MCF 10A (cell line): ENCODE measurements at regions of chr12 and their contacts with region 1.

Region 1: DNA sequence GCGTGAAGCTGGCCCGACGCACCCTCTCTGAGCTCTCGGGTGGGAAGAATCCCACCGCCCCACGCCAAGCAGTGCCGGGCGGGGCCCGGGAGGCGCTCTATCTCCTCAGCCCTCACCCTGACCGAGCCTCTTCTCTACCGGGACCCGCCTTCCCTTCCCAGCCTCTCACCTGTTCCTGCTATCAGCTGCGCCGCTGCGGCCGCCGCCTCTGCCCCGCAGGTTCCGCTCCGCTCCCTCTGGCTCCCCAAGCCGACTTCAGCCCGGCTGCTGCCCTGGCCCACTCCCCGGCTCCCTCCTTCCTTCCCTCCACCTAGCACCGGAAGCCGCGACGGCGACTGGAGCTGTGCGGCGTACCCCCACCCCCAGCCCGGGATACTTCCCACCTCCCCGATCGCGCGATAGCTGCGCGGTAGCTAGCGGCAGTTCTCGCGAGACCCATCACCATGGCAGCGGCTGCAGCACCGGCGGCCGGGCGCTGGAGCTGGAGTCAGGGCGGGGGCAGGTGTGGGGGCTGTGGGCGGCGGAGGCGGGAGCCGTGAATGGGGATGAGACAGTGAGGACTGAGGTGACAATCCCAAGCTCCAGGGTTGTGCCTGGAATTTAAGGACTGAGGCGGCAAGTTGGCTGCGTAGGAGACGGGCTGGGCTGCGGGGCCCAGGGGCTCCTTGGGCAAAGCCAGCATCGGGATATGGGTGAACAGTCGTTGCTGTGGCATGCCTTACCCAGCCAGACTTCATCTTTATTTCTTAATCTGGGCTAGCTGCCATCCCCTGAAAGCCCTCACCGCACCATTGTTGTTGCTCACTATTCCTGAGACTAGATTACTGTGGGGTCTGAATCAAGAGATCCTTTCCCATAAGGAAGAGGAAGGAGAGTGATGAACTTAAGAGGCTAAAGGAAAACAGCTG is at the start of gene ARF3:
- DNase-seq: peak; percentile 92
- H3K4me3 Mint-ChIP-seq: peak within 1 kb of the TSS; percentile 99
- H3K27ac Mint-ChIP-seq: peak within 1 kb of the TSS; percentile 93
- H3K4me1 Mint-ChIP-seq: peaks cover 34% of the 10 kb centered on the region
- H3K27me3 Mint-ChIP-seq: no peaks in the 10 kb centered on the region
- CTCF ChIP-seq: no peak
- total RNA-seq, gene ARF3: 117 and 129 TPM in 2 replicates

Region 2: DNA sequence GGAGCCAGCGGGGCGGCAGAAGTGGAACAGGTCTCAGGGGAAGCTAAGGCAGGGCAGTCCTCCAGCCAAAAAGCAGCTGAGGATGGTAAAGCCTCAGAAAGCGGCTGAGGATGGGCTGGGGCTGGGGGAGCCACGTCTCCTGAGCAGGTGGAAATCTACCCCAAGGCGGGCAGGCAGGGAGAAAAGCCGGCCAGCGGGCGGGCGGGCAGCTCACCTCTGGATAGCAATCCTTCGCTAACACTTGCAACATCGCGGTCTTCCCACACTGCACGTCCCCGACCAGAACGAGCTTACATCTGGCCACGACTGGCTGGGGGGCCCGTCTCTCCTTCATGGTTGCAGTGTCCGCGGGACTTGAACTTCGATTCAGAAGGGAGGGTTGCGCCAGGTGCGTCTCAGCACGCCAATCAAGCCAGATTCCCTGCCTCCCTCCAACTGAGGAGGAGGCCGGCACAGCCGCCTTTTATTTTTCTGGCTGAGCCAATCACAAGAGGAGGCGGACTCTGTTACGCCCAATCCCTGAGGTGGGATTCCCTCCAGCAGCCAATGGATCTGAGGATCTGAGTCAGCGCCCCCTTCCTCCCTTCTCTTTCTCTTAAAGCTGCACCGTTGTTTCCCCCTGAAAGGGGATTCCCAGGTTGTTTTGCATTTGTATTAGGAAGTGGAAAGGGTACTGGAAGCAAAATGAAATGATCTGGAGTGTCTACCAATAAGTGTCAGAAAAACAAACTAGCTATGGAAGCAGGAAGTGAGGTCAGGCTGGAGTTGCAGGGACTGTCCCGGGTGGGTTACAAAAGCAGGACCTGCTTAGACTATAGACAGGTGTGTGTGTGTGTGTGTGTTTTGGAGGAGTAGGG is 91.7 kb before region 1 on chr12 and contains the start of gene RND1:
- CTCF ChIA-PET with region 1: no interaction called
- POLR2A ChIA-PET with region 1: interaction called, 17 read pairs
- intact Hi-C with region 1: no loop called
- DNase-seq: peak; percentile 95
- H3K4me3 Mint-ChIP-seq: peak within 1 kb of the TSS; percentile 81
- H3K27ac Mint-ChIP-seq: peak within 1 kb of the TSS; percentile 71
- H3K4me1 Mint-ChIP-seq: peaks cover 16% of the 10 kb centered on the region
- H3K27me3 Mint-ChIP-seq: no peaks in the 10 kb centered on the region
- CTCF ChIP-seq: no peak
- total RNA-seq, gene RND1: 1.0 and 1.2 TPM in 2 replicates

Region 3: DNA sequence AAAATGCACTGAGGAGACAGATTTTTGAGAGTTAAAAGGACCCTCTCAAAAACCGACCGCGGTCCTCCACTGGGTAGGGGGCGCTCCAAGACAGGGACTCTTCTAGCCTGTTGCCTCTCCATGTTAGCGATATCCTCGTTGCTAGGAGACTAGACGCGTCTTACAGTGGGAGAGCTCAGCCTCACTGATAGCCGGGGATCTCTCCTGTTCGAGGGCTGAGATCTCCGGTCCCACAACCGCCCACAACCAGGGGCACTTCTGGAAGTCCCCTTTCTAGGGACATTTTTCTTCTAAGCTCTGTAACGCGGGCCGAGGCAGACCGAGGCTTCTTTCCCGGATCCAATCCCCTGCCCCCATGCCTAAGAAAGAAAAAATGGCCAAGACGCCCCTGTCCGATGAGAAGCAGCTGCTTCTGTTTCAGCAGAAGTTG is 53.4 kb before region 1 on chr12:
- CTCF ChIA-PET with region 1: no interaction called
- POLR2A ChIA-PET with region 1: no interaction called
- intact Hi-C with region 1: no loop called
- DNase-seq: peak; percentile 59
- H3K4me3 Mint-ChIP-seq: peak overlapping the region; percentile 61
- H3K27ac Mint-ChIP-seq: no peak overlapping the region
- H3K4me1 Mint-ChIP-seq: no peaks in the 10 kb centered on the region
- H3K27me3 Mint-ChIP-seq: no peaks in the 10 kb centered on the region
- CTCF ChIP-seq: peak; percentile 23

Region 4: DNA sequence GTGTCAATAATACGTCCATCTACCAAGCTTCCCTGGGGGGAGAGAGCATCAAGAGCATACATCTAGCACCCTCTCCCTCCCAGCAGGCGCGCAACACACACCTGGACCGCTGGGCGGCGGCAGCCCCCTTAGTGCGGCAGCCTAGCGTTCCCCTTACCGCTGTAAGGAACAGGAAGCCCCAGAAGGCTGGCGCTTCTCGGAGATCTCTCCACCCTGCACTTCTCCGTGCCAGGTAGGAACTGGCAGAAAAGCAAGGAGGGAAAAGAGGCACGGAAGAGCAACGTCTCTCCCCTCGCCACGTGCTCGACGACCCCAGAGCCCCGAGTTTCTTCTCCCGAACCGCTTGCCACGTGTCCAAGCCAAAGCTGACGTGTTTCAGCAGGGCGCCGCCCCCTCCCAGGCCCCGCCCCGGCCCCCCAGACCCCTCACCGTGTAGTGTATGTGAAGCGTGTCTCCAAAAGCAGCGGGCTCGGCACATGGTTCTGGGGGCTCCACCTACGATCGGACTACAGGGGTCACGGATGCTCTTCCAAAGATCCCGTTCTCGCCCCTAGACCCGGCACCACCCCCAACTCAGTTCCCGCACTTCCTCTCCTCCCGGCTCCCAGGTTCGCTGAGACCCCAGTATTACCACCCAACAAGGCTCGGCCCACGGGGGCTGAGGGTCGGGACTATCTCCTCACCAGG is 32.6 kb before region 1 on chr12:
- CTCF ChIA-PET with region 1: no interaction called
- POLR2A ChIA-PET with region 1: interaction called, 10 read pairs
- intact Hi-C with region 1: no loop called
- DNase-seq: no peak
- H3K4me3 Mint-ChIP-seq: no peak overlapping the region
- H3K27ac Mint-ChIP-seq: no peak overlapping the region
- H3K4me1 Mint-ChIP-seq: no peaks in the 10 kb centered on the region
- H3K27me3 Mint-ChIP-seq: no peaks in the 10 kb centered on the region
- CTCF ChIP-seq: no peak

Region 5: GRCh38 chr12:48969833-48970701 is 12.7 kb after region 1 on chr12:
- CTCF ChIA-PET with region 1: interaction called, 8 read pairs
- POLR2A ChIA-PET with region 1: interaction called, 19 read pairs
- intact Hi-C with region 1: no loop called
- DNase-seq: no peak
- H3K4me3 Mint-ChIP-seq: peak overlapping the region; percentile 73
- H3K27ac Mint-ChIP-seq: no peak overlapping the region
- H3K4me1 Mint-ChIP-seq: peaks cover 14% of the 10 kb centered on the region
- H3K27me3 Mint-ChIP-seq: no peaks in the 10 kb centered on the region
- CTCF ChIP-seq: no peak